ENCODE measurements at regions of chr16 and their contacts with region 1.

Region 1: DNA sequence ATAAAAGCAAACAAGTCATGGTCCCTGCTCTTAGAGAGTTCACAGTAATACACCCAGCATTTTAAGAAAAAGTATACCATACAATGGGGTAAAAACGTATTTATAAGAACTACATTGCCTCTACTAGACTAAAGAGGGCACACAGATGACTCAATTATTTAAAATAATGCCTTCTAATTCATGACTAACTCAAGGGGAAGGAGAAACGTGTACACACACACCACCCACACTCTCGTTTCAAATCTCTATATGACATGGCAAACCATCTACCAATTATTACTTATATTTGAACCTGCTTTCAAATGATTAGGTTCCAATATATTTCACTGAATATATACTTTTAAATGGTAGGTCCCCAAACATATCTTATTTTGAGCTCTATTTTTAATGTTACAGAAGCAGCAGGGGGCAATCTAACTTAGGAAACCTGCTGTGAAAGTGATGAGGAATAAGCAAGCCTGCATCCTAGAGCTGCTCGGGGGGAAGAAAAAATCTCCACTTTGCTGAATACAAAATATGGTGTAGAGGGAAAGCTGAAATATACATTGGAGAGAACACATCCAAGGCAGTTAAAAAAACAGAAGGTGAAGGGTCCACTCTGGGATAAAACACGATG is 232.4 kb upstream of the PSMD7 start:
- DNase-seq: no peak
- ATAC-seq: no peak
- H3K4me3 ChIP-seq: no peak overlapping the region
- H3K27ac ChIP-seq: no peak overlapping the region
- H3K4me1 ChIP-seq: no peaks in the 10 kb centered on the region
- H3K27me3 ChIP-seq: peaks cover 0 to 20% (median 0%) of the 10 kb centered on the region in 7 donors
- CTCF ChIP-seq: peak in 4 of 9 donors; percentile 14 to 36 (median 21)

Region 2: GRCh38 chr16:74226338-74226954 is 162.2 kb after region 1 on chr16:
- intact Hi-C with region 1: loop called in 2 of 10 experiments (anchors 5 to 10 kb)
- DNase-seq: no peak
- ATAC-seq: no peak
- H3K4me3 ChIP-seq: peak overlapping the region in 1 of 10 donors; percentile 11
- H3K27ac ChIP-seq: no peak overlapping the region
- H3K4me1 ChIP-seq: peaks cover 0 to 23% (median 0%) of the 10 kb centered on the region in 9 donors
- H3K27me3 ChIP-seq: no peaks in the 10 kb centered on the region
- CTCF ChIP-seq: peak in 7 of 9 donors; percentile 45 to 61 (median 47)

Measured in heart right ventricle (tissue), 16 donors.